ENCODE measurements at regions of chr2 and their contacts with region 1.

Region 1: GRCh38 chr2:46461011-46461674 is 18.2 kb upstream of the TMEM247 start:
- DNase-seq: peak; percentile 68
- H3K4me3 Mint-ChIP-seq: no peak overlapping the region
- H3K27ac Mint-ChIP-seq: peak overlapping the region; percentile 33
- H3K4me1 Mint-ChIP-seq: peaks cover 6% of the 10 kb centered on the region
- H3K27me3 Mint-ChIP-seq: no peaks in the 10 kb centered on the region
- CTCF ChIP-seq: peak; percentile 99

Region 2: DNA sequence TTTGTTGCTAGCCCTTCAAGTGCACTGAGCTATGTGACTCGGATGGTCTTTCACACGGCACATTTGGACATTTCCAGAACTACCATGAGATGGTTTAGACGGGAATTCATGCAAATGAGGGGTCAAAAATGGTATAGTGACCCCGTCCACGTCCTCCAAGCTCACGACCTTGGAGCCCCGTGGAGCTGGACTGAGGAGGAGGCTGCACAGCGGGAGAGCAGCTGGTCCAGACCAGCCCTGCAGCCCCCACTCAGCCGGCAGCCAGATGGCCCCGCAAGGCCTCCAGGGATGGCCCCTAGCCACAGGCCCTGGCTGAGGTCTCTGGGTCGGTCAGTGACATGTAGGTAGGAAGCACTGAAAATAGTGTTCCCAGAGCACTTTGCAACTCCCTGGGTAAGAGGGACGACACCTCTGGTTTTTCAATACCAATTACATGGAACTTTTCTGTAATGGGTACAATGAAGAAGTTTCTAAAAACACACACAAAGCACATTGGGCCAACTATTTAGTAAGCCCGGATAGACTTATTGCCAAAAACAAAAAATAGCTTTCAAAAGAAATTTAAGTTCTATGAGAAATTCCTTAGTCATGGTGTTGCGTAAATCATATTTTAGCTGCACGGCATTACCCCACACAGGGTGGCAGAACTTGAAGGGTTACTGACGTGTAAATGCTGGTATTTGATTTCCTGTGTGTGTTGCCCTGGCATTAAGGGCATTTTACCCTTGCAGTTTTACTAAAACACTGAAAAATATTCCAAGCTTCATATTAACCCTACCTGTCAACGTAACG is 75.2 kb before region 1 on chr2:
- CTCF ChIA-PET with region 1: interaction called, 12 read pairs
- POLR2A ChIA-PET with region 1: interaction called, 4 read pairs
- intact Hi-C with region 1: loop called (anchors 1 kb)
- DNase-seq: peak; percentile 91
- H3K4me3 Mint-ChIP-seq: no peak overlapping the region
- H3K27ac Mint-ChIP-seq: peak overlapping the region; percentile 46
- H3K4me1 Mint-ChIP-seq: peaks cover 15% of the 10 kb centered on the region
- H3K27me3 Mint-ChIP-seq: no peaks in the 10 kb centered on the region
- CTCF ChIP-seq: no peak

Measured in MCF 10A (cell line).